Motor neuron (in vitro differentiated cells): ENCODE measurements at regions of chr6 and their contacts with region 1.

Region 1: DNA sequence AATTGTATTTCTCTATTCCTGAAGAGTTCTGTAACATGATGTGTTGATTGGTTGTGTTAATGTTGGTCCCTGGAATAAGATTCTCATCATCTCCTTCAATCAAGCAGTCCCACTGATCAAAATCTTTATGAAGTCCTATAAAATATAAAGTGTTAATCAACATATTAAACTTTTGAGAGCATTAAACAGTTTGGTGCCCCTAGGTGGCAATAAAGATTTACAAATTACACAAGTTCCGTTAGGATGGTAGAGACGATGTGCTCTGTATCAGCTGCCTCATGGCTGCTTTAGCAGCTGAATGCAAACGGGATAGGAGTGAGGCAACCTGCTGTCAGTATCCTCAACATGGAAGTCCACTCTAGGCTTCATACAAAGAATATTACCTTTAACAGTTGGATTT is 16.9 kb downstream of the TDRD6 start:
- ATAC-seq: peak in 5 of 8 experiments; percentile 39 to 73 (median 67)
- H3K4me3 ChIP-seq: no peak overlapping the region
- H3K27ac ChIP-seq: no peak overlapping the region
- H3K4me1 ChIP-seq: no peaks in the 10 kb centered on the region

Region 2: GRCh38 chr6:46325561-46326530 is 378.7 kb before region 1 on chr6:
- in situ Hi-C with region 1: no loop called
- ATAC-seq: peak; percentile 16 to 97 (median 94)
- H3K4me3 ChIP-seq: peak overlapping the region; percentile 7 to 37 (median 35)
- H3K27ac ChIP-seq: peak overlapping the region in 1 of 2 donors; percentile 80
- H3K4me1 ChIP-seq: peaks cover 6 to 34% of the 10 kb centered on the region in 2 donors

Region 3: GRCh38 chr6:46949632-46950280 is 245.2 kb after region 1 on chr6:
- in situ Hi-C with region 1: no loop called
- ATAC-seq: peak in 3 of 8 experiments; percentile 41 to 93 (median 75)
- H3K4me3 ChIP-seq: no peak overlapping the region
- H3K27ac ChIP-seq: no peak overlapping the region
- H3K4me1 ChIP-seq: peaks cover 0 to 14% of the 10 kb centered on the region in 2 donors

Region 4: DNA sequence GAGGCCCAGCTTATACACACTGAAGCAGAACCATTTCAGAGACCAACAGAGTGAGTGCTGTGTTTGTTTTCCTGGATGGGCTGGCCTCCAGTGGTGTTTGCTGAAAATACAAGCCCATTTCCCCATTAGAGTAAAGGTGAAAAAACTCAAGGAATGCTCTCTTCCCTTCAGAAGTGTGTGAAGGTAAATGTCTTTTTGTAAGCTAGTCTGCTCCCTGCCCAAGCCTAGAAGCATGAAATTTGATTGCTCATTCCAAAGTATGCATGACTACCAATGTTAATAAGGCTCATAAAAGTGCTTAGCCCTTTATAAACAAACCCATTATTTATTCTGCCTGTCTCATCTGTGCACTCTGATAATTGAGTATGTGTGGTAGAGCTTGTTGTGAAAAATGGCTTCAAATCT is 278.4 kb after region 1 on chr6:
- in situ Hi-C with region 1: loop called in 1 of 9 experiments (anchors 25 kb)
- ATAC-seq: peak; percentile 46 to 88 (median 72)
- H3K4me3 ChIP-seq: no peak overlapping the region
- H3K27ac ChIP-seq: no peak overlapping the region
- H3K4me1 ChIP-seq: peaks cover 9 to 14% of the 10 kb centered on the region in 2 donors